SK-N-SH (cell line): ENCODE measurements at regions of chr4 and their contacts with region 1.

Region 1: DNA sequence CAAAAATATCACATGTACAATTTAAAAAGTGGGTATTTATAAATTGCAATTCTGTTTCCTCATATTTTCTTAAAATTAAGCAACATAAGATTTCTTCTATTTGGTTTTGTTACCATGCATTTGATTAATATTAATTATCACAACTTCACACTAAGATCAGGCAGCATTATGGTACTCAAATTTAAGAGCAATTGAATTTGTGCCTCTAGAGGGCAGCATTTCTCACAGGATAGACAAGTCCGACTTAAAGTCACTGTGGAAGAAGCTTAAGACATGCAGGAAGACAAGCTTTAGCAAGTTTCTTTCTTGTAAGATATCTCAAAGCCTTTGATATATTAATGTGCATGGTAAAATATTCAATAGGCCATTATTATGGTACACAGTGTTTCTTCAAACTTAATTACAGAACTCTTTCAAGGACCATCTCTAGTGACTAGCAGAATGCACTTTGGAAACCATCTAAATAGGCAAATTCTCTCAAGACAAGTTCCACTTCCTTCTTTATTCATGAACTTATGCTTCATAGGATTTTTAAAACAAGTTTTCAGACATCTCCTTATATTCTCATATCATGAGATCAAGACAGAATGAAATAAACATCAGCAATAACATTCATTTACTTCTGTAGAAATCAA is 35.0 kb downstream of the FBXW7 start:
- DNase-seq: peak; percentile 34
- H3K4me3 ChIP-seq: no peak overlapping the region
- H3K27ac ChIP-seq: no peak overlapping the region
- H3K4me1 ChIP-seq: peaks cover 0 to 10% of the 10 kb centered on the region in 2 experiments; a peak in 3 of 4 replicates
- H3K27me3 ChIP-seq: no peaks in the 10 kb centered on the region
- CTCF ChIP-seq: peak; percentile 94
- EP300 ChIP-seq: no peak
- RAD21 ChIP-seq: peak; percentile 83

Region 2: DNA sequence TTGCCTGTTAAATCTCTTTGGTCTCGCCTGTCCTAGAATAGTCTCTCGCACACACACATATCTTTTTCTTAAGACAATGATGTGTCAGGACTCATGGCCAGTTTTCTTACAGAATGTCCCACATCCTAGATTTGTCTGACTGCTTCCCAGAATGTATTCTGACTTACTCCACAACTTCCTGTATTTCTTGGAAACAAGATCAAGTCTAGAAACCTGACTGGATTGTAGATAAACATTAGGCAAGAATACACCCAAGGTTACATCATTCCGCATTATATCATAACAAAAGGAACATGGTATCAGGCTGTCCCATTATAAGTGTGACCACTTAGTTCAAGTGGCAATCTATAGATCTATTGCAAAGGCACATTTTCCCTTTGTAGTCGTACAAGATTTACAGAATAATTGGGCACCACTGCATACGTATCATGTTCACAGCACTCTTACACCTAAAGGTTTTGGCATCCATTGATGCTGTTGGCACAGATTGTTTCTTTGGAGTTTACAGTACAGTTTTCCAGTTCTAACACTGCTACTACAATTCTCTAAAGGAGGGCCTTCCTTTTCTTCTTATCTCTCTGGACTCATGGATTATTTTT is 21.4 kb before region 1 on chr4:
- CTCF ChIA-PET with region 1: interaction called, 18 read pairs
- POLR2A ChIA-PET with region 1: no interaction called
- DNase-seq: no peak
- H3K4me3 ChIP-seq: no peak overlapping the region
- H3K27ac ChIP-seq: peak overlapping the region; percentile 17 to 90; a peak in 3 of 4 replicates
- H3K4me1 ChIP-seq: peaks cover 0 to 15% of the 10 kb centered on the region in 2 experiments; a peak in 2 of 4 replicates
- H3K27me3 ChIP-seq: no peaks in the 10 kb centered on the region
- CTCF ChIP-seq: no peak
- EP300 ChIP-seq: no peak
- RAD21 ChIP-seq: no peak

Region 3: GRCh38 chr4:152515678-152516077 is 14.8 kb after region 1 on chr4:
- CTCF ChIA-PET with region 1: interaction called, 42 read pairs
- POLR2A ChIA-PET with region 1: no interaction called
- DNase-seq: no peak
- H3K4me3 ChIP-seq: no peak overlapping the region
- H3K27ac ChIP-seq: peak overlapping the region in 1 of 2 experiments; percentile 63; a peak in 2 of 4 replicates
- H3K4me1 ChIP-seq: peaks cover 7 to 8% of the 10 kb centered on the region in 2 experiments; a peak in 3 of 4 replicates
- H3K27me3 ChIP-seq: no peaks in the 10 kb centered on the region
- CTCF ChIP-seq: no peak
- EP300 ChIP-seq: peak in 1 of 2 experiments; percentile 46; a peak in 1 of 4 replicates
- RAD21 ChIP-seq: no peak

Region 4: GRCh38 chr4:152535903-152536544 is 35.1 kb after region 1 on chr4 and contains the start of gene FBXW7:
- CTCF ChIA-PET with region 1: interaction called, 15 read pairs
- POLR2A ChIA-PET with region 1: no interaction called
- DNase-seq: peak; percentile 97
- H3K4me3 ChIP-seq: peak within 1 kb of the TSS; percentile 96 to 99
- H3K27ac ChIP-seq: peak within 1 kb of the TSS; percentile 91
- H3K4me1 ChIP-seq: peaks cover 8 to 18% of the 10 kb centered on the region in 2 experiments; a peak in 3 of 4 replicates
- H3K27me3 ChIP-seq: no peaks in the 10 kb centered on the region
- CTCF ChIP-seq: no peak
- EP300 ChIP-seq: 0 out of 4 replicates have a peak, but pooled peaks of 1 of the 2 experiments have one; percentile 5
- RAD21 ChIP-seq: no peak
- polyA plus RNA-seq, gene FBXW7: 7.7 and 11.4 TPM in 2 replicates

Region 5: GRCh38 chr4:152607178-152607577 is 106.3 kb after region 1 on chr4:
- CTCF ChIA-PET with region 1: interaction called, 16 read pairs
- POLR2A ChIA-PET with region 1: no interaction called
- DNase-seq: peak; percentile 18
- H3K4me3 ChIP-seq: no peak overlapping the region
- H3K27ac ChIP-seq: no peak overlapping the region
- H3K4me1 ChIP-seq: peaks cover 0 to 19% of the 10 kb centered on the region in 2 experiments; a peak in 1 of 4 replicates
- H3K27me3 ChIP-seq: no peaks in the 10 kb centered on the region
- CTCF ChIP-seq: no peak
- EP300 ChIP-seq: no peak
- RAD21 ChIP-seq: no peak

Region 6: GRCh38 chr4:152640058-152640833 is 139.3 kb after region 1 on chr4:
- CTCF ChIA-PET with region 1: interaction called, 125 read pairs
- POLR2A ChIA-PET with region 1: interaction called, 4 read pairs
- DNase-seq: peak; percentile 42
- H3K4me3 ChIP-seq: no peak overlapping the region
- H3K27ac ChIP-seq: no peak overlapping the region
- H3K4me1 ChIP-seq: peaks cover 0 to 13% of the 10 kb centered on the region in 2 experiments; a peak in 1 of 4 replicates
- H3K27me3 ChIP-seq: no peaks in the 10 kb centered on the region
- CTCF ChIP-seq: peak; percentile 79
- EP300 ChIP-seq: no peak
- RAD21 ChIP-seq: peak; percentile 78

Region 7: DNA sequence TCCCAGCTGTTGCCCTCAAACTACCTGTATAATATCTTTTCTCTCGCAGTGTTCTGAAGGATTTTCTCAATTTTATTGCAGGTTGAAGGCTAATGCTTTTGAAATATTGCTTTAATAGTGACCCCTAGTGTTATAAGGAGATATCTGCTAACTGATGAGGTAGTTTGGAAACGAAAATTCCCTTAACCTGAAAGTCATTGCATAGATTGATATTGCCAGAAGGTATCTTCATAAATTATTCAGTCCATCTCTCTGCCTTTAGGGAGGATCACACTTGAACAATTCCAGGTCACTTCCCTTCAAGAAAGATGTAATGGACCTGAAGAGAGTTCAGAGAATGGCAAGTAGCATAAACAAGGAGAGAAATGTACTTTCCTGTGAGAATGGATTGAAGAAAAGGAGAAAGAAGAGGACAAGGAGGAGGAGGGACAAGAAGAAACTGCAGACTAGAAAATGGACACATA is 234.5 kb after region 1 on chr4:
- CTCF ChIA-PET with region 1: interaction called, 16 read pairs
- POLR2A ChIA-PET with region 1: no interaction called
- DNase-seq: peak; percentile 50
- H3K4me3 ChIP-seq: no peak overlapping the region; a peak in 1 of 4 replicates
- H3K27ac ChIP-seq: no peak overlapping the region
- H3K4me1 ChIP-seq: no peaks in the 10 kb centered on the region
- H3K27me3 ChIP-seq: no peaks in the 10 kb centered on the region
- CTCF ChIP-seq: peak; percentile 73
- EP300 ChIP-seq: no peak
- RAD21 ChIP-seq: peak; percentile 74